ENCODE measurements at regions of chr18 and their contacts with region 1.

Region 1: DNA sequence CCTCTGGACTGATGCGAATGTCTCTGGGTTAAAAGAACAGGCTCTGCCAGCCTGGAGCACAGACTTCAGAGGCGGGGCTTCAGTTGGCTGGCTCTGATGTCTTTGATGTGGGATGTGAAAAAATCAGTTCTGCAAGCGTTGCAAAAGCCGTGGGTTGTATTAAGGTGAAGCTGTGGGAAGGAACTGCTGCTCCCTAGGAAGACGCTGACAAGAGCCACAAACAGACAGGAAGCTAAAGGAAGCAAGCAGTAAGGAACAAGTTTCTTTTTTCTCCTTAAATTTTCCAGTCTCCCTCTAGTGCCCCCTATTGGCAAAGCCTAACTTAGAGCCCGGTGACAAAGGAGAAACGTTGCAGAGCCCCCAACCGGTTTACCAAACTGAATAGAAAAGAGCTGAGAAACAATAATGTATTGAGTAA is 239.0 kb downstream of the CCDC178 start:
- DNase-seq: peak; percentile 75
- H3K4me3 ChIP-seq: peak overlapping the region in 2 of 3 experiments; percentile 10 to 12
- H3K27ac ChIP-seq: no peak overlapping the region
- H3K4me1 ChIP-seq: peaks cover 2% of the 10 kb centered on the region
- H3K27me3 ChIP-seq: no peaks in the 10 kb centered on the region
- CTCF ChIP-seq: peak; percentile 65 to 77
- POLR2A ChIP-seq: no peak

Region 2: GRCh38 chr18:32530947-32531651 is 670.4 kb before region 1 on chr18:
- CTCF ChIA-PET with region 1: no interaction called
- POLR2A ChIA-PET with region 1: no interaction called
- dilution Hi-C with region 1: no loop called
- intact Hi-C with region 1: no loop called
- DNase-seq: no peak
- H3K4me3 ChIP-seq: no peak overlapping the region
- H3K27ac ChIP-seq: no peak overlapping the region
- H3K4me1 ChIP-seq: no peaks in the 10 kb centered on the region
- H3K27me3 ChIP-seq: no peaks in the 10 kb centered on the region
- CTCF ChIP-seq: no peak
- POLR2A ChIP-seq: no peak

Region 3: DNA sequence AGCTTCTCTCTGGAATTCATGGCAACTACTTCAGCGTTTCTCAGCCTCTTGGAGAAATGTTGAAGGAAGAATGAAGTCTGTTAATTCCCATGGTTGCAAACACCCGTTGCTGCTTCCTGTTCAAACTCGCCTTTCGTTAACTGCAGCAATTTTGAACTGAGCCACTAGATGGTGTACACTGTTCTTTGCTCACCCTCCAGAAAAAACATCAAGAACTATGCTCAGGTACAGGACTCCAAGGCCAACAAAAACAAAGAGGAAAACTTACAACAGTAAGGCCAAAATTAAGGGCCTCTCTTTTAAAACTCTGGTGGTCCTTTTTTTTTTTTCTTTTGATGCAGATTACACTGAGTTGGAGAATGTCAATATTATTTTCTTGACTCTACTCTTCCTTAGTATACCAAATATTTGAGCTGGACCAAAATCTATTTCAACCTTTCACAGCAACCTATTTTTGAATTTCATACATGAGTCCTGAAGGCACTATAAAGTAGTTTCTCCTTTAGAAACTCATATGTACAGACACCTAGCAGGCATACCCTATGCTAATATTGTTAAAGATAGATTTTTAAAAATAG is 486.9 kb before region 1 on chr18:
- CTCF ChIA-PET with region 1: interaction called, 49 read pairs
- POLR2A ChIA-PET with region 1: no interaction called
- dilution Hi-C with region 1: no loop called
- intact Hi-C with region 1: loop called (anchors 1 kb)
- DNase-seq: peak; percentile 81
- H3K4me3 ChIP-seq: no peak overlapping the region
- H3K27ac ChIP-seq: no peak overlapping the region
- H3K4me1 ChIP-seq: no peaks in the 10 kb centered on the region
- H3K27me3 ChIP-seq: peaks cover 2 to 5% of the 10 kb centered on the region in 2 experiments
- CTCF ChIP-seq: peak; percentile 67 to 70
- POLR2A ChIP-seq: no peak

Region 4: DNA sequence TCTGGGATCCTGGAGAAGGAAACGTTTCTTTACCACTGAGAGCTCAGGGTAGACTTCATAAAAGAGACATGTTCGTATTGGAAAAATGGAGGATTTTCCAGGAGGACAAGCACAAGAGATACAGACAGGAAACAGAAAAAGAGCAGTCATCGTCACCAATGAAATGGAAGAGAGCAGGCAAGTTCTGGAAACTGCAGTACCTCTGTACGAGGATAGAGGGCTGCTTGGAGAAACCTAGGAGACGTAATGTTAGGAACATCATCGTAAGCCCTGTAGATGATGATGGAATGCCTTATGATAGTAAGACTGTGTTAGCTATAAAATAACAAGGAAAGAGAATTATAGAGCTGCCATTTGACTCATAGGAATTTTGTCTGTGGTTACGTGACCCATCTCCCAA is 307.6 kb before region 1 on chr18:
- CTCF ChIA-PET with region 1: interaction called, 10 read pairs
- POLR2A ChIA-PET with region 1: no interaction called
- dilution Hi-C with region 1: no loop called
- intact Hi-C with region 1: loop called (anchors 5 kb)
- DNase-seq: no peak
- H3K4me3 ChIP-seq: no peak overlapping the region
- H3K27ac ChIP-seq: no peak overlapping the region
- H3K4me1 ChIP-seq: no peaks in the 10 kb centered on the region
- H3K27me3 ChIP-seq: no peaks in the 10 kb centered on the region
- CTCF ChIP-seq: peak in 1 of 2 donors; percentile 11
- POLR2A ChIP-seq: no peak

Region 5: GRCh38 chr18:33135951-33136660 is 65.4 kb before region 1 on chr18:
- CTCF ChIA-PET with region 1: interaction called, 7 read pairs
- POLR2A ChIA-PET with region 1: no interaction called
- dilution Hi-C with region 1: no loop called
- intact Hi-C with region 1: loop called (anchors 2 kb)
- DNase-seq: peak; percentile 93
- H3K4me3 ChIP-seq: peak overlapping the region in 1 of 3 experiments; percentile 19
- H3K27ac ChIP-seq: peak overlapping the region; percentile 84
- H3K4me1 ChIP-seq: peaks cover 21% of the 10 kb centered on the region
- H3K27me3 ChIP-seq: no peaks in the 10 kb centered on the region
- CTCF ChIP-seq: no peak
- POLR2A ChIP-seq: peak; percentile 38

Region 6: DNA sequence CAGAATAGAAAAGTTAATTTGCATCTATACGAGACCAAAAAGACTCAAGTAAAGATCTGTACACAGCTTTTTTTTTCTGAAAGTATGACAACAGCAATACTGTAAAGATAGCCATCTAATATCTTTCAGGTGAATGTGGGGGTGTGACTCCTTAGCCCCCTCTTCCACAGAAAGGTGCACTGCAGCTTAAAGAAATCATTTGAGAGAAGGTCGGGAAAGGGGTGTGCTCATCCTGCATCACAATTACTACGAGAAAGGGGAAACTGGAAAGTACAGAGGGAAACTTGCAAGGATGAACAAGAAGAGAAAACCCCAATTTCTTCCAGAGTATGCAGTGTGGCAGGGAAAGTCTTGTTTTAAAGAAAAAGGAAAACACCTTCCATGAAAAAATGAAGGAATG is 16.6 kb before region 1 on chr18:
- CTCF ChIA-PET with region 1: interaction called, 11 read pairs
- POLR2A ChIA-PET with region 1: no interaction called
- dilution Hi-C with region 1: no loop called
- intact Hi-C with region 1: no loop called
- DNase-seq: peak; percentile 12
- H3K4me3 ChIP-seq: no peak overlapping the region
- H3K27ac ChIP-seq: peak overlapping the region; percentile 77
- H3K4me1 ChIP-seq: peaks cover 16% of the 10 kb centered on the region
- H3K27me3 ChIP-seq: no peaks in the 10 kb centered on the region
- CTCF ChIP-seq: no peak
- POLR2A ChIP-seq: no peak

Region 7: DNA sequence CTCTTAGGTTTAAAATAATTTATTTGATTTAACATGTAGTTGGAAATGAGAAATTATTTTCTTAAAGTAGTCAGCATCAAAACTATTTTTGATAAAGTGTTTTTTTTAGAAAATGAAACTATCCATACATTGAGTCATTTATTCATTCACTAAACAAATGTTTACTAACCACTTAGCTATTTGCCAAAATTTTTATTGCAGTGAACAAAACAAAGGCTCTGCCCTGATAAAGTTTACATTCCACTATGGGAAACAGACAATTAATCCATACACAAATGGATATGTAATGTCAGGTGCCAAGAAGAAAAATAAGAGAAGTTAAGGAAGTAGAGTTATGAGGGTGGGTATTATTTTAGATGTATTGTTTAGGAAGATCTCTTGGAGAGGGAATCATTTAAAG is 258.1 kb after region 1 on chr18:
- CTCF ChIA-PET with region 1: no interaction called
- POLR2A ChIA-PET with region 1: no interaction called
- dilution Hi-C with region 1: no loop called
- intact Hi-C with region 1: no loop called
- DNase-seq: no peak
- H3K4me3 ChIP-seq: no peak overlapping the region
- H3K27ac ChIP-seq: no peak overlapping the region
- H3K4me1 ChIP-seq: no peaks in the 10 kb centered on the region
- H3K27me3 ChIP-seq: no peaks in the 10 kb centered on the region
- CTCF ChIP-seq: no peak
- POLR2A ChIP-seq: no peak

Region 8: GRCh38 chr18:33505798-33506197 is 304.3 kb after region 1 on chr18:
- CTCF ChIA-PET with region 1: no interaction called
- POLR2A ChIA-PET with region 1: no interaction called
- dilution Hi-C with region 1: no loop called
- intact Hi-C with region 1: no loop called
- DNase-seq: no peak
- H3K4me3 ChIP-seq: no peak overlapping the region
- H3K27ac ChIP-seq: no peak overlapping the region
- H3K4me1 ChIP-seq: no peaks in the 10 kb centered on the region
- H3K27me3 ChIP-seq: no peaks in the 10 kb centered on the region
- CTCF ChIP-seq: no peak
- POLR2A ChIP-seq: no peak